ENCODE measurements at regions of chr13 and their contacts with region 1.

Region 1: DNA sequence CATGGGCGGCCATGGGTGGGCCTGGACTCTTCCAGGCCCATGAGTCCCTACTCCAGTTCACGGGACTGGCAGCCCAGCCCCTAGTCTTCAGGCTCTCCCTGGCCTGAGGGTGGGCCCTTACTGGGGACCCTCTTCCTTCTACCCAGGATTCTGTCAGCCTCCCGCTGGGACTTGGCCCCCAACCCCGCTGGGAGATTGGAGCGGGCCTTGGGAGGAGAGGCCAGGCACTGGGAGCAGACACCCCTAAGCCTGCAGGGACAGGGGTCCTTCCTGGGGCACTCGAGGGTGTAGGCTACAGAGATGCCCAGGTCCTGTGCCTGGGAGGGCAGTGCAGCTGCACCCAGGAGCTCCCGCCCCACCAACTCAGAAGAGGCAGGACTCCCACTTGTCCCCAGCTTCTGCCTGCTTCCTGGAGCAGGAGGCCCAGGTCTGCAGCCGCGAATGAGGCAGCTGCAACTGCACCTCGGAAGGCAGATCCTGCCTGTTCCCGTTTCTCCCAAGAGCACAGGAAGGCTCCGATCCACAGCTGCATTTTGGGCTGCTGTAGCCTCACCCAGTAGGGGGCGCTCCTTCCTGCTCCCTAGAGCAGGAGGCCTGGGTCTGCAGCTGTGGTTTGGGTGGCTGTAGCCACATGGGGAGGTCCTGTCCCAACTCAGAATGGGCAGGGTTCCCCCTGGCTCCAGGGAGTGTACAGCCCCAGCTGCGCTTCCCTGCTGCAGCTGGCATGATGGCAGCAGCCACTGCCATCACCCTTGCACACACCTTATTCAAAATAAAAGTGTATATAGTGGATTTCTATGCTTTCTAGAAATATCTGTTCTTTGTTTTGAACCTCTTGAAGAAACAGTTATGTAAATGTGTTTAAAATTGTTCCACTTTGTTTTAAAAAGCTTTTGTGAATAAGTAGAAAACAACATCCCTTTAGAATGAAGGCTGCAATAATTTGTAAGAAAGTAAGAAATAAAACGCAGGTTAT is 46.8 kb downstream of the TEX26 start:
- H3K4me3 ChIP-seq: no peak overlapping the region
- H3K27ac ChIP-seq: no peak overlapping the region
- H3K4me1 ChIP-seq: peaks cover 2% of the 10 kb centered on the region; the same call in 1 of the 2 replicates
- CTCF ChIP-seq: 0 out of 2 replicates have a peak, but pooled peaks have one; percentile 10

Region 2: DNA sequence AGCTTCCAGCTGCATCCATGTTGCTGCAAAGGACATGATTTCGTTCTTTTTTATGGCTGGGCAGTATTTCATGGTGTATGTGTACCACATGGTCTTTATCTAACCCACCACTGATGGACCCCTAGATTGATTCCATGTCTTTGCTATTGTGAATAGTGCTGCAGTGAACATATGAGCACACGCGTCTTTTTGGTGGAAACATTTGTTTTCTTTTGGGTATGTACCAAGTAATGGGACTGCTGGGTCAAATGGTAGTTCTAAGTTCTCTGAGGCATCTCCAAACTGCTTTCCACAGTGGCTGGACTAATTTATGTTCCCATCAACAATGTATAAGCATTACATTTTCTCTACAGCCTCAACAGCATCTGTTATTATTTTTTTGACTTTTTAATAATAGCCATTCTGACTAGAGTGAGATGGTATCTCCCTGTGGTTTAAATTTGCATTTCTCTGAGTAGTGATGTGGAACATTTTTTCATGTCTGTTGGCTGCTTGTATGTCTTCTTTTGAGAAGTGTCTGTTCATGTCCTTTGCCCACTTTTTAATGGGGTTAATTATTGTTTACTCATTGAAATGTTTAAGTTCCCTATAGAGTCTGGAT is 563.7 kb before region 1 on chr13:
- CTCF ChIA-PET with region 1: no interaction called
- POLR2A ChIA-PET with region 1: no interaction called
- H3K4me3 ChIP-seq: no peak overlapping the region
- H3K27ac ChIP-seq: no peak overlapping the region
- H3K4me1 ChIP-seq: no peaks in the 10 kb centered on the region
- CTCF ChIP-seq: no peak

Region 3: GRCh38 chr13:30465585-30466357 is 513.5 kb before region 1 on chr13 and contains the start of gene HMGB1:
- CTCF ChIA-PET with region 1: no interaction called
- POLR2A ChIA-PET with region 1: no interaction called
- H3K4me3 ChIP-seq: peak within 1 kb of the TSS; percentile 46
- H3K27ac ChIP-seq: peak within 1 kb of the TSS; percentile 95
- H3K4me1 ChIP-seq: peaks cover 6% of the 10 kb centered on the region; the same call in 1 of the 2 replicates
- CTCF ChIP-seq: no peak

Region 4: GRCh38 chr13:30968846-30969245 is 10.4 kb before region 1 on chr13:
- CTCF ChIA-PET with region 1: interaction called, 10 read pairs
- POLR2A ChIA-PET with region 1: no interaction called
- H3K4me3 ChIP-seq: no peak overlapping the region
- H3K27ac ChIP-seq: no peak overlapping the region
- H3K4me1 ChIP-seq: no peaks in the 10 kb centered on the region
- CTCF ChIP-seq: no peak

Region 5: GRCh38 chr13:31009166-31009565 is 29.9 kb after region 1 on chr13:
- CTCF ChIA-PET with region 1: interaction called, 11 read pairs
- POLR2A ChIA-PET with region 1: no interaction called
- H3K4me3 ChIP-seq: no peak overlapping the region
- H3K27ac ChIP-seq: no peak overlapping the region
- H3K4me1 ChIP-seq: no peaks in the 10 kb centered on the region
- CTCF ChIP-seq: no peak